BJ (cell line): ENCODE measurements at regions of chr3 and their contacts with region 1.

Region 1: DNA sequence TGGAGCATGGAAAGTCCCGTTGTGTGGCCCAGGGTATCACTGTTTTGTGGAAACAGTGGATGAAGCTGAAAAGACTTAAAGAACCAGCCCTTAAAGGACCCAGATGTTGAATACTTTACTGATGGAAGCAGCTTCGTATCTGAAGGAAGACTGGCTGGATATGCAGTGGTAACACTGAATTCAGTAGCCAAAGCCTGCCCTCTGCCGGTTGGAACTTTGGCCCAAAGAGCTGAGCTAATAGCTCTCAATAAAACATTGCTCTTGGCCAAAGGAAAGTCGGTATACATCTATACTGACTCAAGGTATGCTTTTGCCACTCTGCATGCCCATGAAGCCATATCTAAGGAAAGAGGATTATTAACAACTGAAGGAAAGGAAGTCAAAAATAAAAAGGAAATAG is 885.4 kb downstream of the PDCD6IP start:
- DNase-seq: no peak
- H3K4me3 ChIP-seq: no peak overlapping the region
- H3K27me3 ChIP-seq: no peaks in the 10 kb centered on the region
- CTCF ChIP-seq: peak; percentile 65

Region 2: GRCh38 chr3:34247394-34247793 is 436.5 kb before region 1 on chr3:
- CTCF ChIA-PET with region 1: no interaction called
- POLR2A ChIA-PET with region 1: no interaction called
- DNase-seq: no peak
- H3K4me3 ChIP-seq: no peak overlapping the region
- H3K27me3 ChIP-seq: no peaks in the 10 kb centered on the region
- CTCF ChIP-seq: no peak

Region 3: GRCh38 chr3:34260271-34261006 is 423.4 kb before region 1 on chr3:
- CTCF ChIA-PET with region 1: interaction called, 10 read pairs
- POLR2A ChIA-PET with region 1: no interaction called
- DNase-seq: no peak
- H3K4me3 ChIP-seq: no peak overlapping the region
- H3K27me3 ChIP-seq: no peaks in the 10 kb centered on the region
- CTCF ChIP-seq: peak; percentile 70